Posterior cingulate gyrus (tissue), 11 donors: ENCODE measurements at regions of chr17 and their contacts with region 1.

Region 1: DNA sequence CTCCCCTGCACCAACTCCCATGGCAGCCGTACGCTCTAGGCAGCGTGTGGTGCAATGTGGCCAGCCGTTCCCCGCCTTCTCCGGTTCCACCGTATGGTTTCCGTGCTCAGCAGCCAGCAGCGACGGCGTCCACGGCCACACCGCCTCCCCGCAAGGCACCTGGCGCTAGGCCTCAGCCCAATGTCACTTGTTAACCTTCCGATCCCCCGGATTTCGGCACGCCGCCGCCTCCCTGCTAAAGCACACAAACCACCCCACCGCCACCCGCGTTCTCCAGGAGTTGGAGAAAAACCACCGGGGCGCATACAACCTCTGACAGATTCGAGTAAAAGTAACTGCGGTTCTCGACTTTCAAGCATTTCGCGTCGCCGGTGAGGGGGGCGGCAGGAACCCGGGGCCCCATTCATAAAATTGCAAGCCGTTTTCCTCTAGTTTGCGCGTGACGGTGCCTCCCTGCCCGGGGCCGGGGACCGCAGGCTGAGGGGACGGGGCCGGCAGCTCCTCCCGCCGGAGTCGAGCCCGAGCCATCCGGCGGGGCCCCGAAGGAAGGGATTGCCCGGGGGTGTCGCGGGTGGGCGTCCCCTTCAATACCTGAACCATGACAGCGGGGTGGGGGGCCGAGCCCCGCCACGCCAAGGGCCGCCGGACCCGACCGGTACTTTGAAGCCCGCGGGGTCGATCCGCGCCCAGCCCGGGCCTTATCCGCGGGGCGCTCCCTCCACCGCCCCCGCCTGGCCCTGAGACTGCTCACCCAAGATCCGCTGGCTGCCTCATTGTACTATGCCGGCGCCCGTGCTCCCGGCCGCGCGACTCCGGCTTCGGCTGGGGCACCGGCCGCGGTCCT is at the start of gene TEX2:
- DNase-seq: peak; percentile 27 to 93 (median 43)

Region 2: DNA sequence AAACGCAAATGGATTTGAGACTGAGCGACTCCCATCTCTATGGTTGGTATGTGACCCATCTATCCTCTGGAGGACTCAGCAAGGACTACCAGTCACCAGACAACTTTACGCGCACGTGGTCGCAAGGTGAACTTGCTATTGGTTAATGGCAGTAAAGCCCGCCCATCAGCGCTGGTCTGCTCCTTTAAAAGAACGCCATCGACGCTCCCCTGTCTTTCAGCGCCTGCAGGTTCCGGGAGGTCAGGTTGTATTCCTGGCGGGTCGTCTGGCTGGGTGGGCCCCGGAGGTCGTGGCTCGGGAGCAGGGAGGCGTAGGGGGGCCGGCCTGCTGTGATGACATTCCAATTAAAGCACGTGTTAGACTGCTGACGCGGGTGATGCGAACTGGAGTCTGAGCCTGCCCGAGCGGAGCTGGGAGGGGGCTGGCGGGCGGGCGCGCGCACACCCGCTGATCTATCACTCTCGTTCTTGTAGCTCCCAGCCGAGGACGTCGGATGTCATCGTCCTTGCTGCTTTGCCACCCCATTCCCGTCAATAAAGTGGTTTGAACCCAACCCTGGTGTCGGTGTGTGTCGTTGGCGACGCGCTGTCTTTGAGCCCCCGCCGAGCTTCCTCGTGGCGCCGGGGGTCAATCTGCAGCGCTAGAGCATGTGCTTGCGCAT is 116.8 kb before region 1 on chr17:
- intact Hi-C with region 1: loop called (anchors 5 kb)
- DNase-seq: peak; percentile 96 to 100 (median 99)

Region 3: DNA sequence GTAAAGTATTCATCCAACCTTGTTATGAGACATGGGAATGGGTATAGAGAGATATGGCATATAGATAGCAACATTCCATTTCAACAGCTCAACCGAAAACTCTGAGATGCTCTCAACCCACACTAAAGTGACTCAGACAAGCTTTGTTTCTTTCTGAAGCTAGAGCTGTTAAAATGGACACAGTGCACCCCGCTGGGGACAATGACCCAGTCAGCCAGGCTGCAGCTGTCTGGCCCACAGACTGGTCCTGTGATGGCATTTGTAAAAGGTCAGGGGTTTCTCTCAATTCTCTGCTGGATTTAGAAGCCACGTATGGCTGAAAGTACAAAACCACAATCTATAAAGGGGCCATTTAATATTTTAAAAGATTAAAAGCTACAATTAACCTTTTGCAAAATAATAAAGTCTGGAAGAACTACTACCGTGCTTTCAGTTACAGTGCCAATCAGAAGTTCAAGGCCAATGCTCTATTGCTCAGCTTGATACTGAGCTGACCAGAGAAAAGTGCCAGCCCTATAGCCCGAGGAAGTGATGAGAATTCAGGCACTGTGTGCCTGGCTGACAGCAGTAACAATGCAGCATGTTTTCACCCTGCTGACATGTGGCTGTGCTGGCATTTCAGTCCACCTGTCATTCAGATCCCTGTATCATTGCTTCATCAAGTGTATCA is 59.8 kb before region 1 on chr17:
- intact Hi-C with region 1: loop called (anchors 10 kb)
- DNase-seq: peak in 9 of 10 donors; percentile 43 to 96 (median 66)

Region 4: DNA sequence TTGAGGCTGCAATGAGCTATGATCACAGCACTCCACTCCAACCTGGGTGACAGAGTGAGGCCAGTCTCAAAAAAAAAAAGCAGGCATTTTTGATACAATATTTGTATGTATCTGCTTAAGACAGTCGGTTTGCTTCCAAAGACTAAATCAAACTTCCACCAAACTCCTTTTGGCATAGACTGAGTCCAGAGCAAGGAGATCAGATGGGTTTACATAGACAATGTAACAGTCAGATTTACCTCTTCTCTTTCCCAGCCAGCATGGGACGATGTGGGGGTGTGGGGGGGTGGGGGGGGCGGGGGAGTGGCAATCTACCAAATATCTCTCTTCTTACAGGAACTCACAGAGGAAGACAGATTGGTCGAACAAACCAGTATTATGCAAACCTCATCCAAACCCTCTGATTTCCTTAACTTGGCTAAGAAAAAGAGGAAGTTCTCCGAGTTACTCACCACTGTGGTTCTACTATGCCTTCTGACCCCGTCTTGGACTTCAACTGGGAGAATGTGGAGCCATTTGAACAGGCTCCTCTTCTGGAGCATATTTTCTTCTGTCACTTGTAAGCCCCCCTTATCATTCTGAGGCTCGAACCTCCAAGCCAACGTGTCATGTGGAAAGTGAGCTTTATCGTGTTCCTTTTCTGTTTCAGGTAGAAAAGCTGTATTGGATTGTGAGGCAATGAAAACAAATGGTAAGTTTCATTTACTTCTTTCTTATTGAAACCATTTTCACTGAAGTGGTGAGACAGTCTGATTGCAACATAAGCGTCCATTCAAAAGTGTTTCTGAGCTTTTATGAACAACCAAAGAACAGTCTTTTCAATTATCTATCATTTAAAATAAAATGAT is 186.2 kb after region 1 on chr17 and contains the start of gene MILR1:
- intact Hi-C with region 1: no loop called
- DNase-seq: no peak